ENCODE measurements at regions of chrX and their contacts with region 1.

Region 1: GRCh38 chrX:78555401-78555980 is 103.6 kb downstream of the RTL3 start:
- DNase-seq: peak in 3 of 14 experiments; percentile 41 to 48 (median 45)
- ATAC-seq: peak; percentile 26
- H3K4me3 ChIP-seq: no peak overlapping the region
- H3K4me3 Mint-ChIP-seq: no peak overlapping the region
- H3K27ac ChIP-seq: no peak overlapping the region
- H3K27ac Mint-ChIP-seq: no peak overlapping the region
- H3K4me1 ChIP-seq: no peaks in the 10 kb centered on the region
- H3K4me1 Mint-ChIP-seq: peaks cover 9% of the 10 kb centered on the region
- H3K27me3 ChIP-seq: no peaks in the 10 kb centered on the region
- H3K27me3 Mint-ChIP-seq: no peaks in the 10 kb centered on the region
- CTCF ChIP-seq: peak; percentile 47

Region 2: DNA sequence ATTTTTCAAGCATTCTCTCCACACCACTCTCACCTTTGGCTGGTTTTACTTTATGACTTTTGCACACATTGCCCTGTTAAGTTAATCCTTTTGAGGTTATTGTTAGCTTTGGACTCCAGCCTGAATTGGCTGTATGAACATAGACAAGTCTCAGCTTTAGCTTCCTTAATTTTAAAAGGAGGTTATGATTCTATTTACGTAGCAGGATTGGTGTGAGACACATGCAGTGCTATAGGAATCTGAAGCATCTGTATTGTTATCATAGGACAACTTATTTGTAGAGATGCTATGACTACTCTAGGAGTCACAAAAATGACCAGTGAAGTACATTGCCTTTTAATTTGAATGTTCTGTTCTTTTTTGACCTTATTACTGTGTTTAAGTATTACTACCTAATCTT is 601.8 kb before region 1 on chrX:
- CTCF ChIA-PET with region 1: no interaction called
- POLR2A ChIA-PET with region 1: no interaction called
- intact Hi-C with region 1: no loop called
- DNase-seq: no peak
- ATAC-seq: no peak
- H3K4me3 ChIP-seq: no peak overlapping the region
- H3K4me3 Mint-ChIP-seq: no peak overlapping the region
- H3K27ac ChIP-seq: no peak overlapping the region
- H3K27ac Mint-ChIP-seq: no peak overlapping the region
- H3K4me1 ChIP-seq: no peaks in the 10 kb centered on the region
- H3K4me1 Mint-ChIP-seq: peaks cover 21% of the 10 kb centered on the region
- H3K27me3 ChIP-seq: no peaks in the 10 kb centered on the region
- H3K27me3 Mint-ChIP-seq: no peaks in the 10 kb centered on the region
- CTCF ChIP-seq: no peak

Region 3: DNA sequence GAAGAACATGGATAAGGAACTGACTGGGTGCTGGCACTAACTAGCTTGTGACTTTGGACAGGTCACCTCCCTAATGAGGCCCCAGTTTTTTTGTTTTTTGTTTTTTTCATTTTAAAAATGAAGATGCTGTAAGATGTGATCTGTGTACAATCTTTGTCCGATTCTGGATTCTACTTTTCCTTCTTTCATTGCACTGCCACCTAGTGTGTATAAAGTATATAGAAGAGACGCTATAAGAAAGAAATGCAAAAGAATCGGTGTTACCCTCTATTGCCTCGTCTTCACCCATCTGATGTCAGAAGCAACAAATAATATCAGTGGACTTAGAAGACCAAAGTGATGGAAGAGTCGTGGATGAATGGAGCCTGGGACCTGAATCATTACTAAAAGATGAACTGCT is 331.1 kb after region 1 on chrX:
- CTCF ChIA-PET with region 1: no interaction called
- POLR2A ChIA-PET with region 1: no interaction called
- intact Hi-C with region 1: loop called (anchors 5 to 10 kb)
- DNase-seq: peak in 3 of 14 experiments; percentile 28 to 40 (median 36)
- ATAC-seq: peak; percentile 71
- H3K4me3 ChIP-seq: no peak overlapping the region
- H3K4me3 Mint-ChIP-seq: no peak overlapping the region
- H3K27ac ChIP-seq: no peak overlapping the region
- H3K27ac Mint-ChIP-seq: no peak overlapping the region
- H3K4me1 ChIP-seq: no peaks in the 10 kb centered on the region
- H3K4me1 Mint-ChIP-seq: peaks cover 8% of the 10 kb centered on the region
- H3K27me3 ChIP-seq: no peaks in the 10 kb centered on the region
- H3K27me3 Mint-ChIP-seq: no peaks in the 10 kb centered on the region
- CTCF ChIP-seq: peak; percentile 53

Region 4: DNA sequence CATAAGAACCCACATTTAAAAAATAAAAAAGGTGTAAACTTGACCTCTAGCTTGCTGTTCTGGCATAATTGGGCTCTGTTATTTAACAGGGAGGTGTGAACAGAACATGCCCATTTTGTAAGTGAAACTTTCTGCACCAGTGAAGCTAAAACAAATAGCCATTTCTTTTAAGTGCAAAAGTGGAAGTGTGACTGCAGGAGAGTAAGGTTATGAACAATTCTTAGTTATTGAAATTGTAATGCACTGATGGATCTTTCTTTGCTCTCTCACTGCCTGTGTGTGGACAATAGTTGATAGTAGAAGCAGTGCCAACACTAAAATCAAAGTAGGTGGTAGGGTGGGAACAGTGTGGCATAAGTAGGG is 402.3 kb after region 1 on chrX:
- CTCF ChIA-PET with region 1: no interaction called
- POLR2A ChIA-PET with region 1: no interaction called
- intact Hi-C with region 1: loop called in 1 of 2 experiments (anchors 10 kb)
- DNase-seq: no peak
- ATAC-seq: no peak
- H3K4me3 ChIP-seq: no peak overlapping the region
- H3K4me3 Mint-ChIP-seq: peak overlapping the region; percentile 45
- H3K27ac ChIP-seq: peak overlapping the region; percentile 13 to 28
- H3K27ac Mint-ChIP-seq: peak overlapping the region; percentile 63
- H3K4me1 ChIP-seq: peaks cover 28% of the 10 kb centered on the region
- H3K4me1 Mint-ChIP-seq: peaks cover 79% of the 10 kb centered on the region
- H3K27me3 ChIP-seq: no peaks in the 10 kb centered on the region
- H3K27me3 Mint-ChIP-seq: no peaks in the 10 kb centered on the region
- CTCF ChIP-seq: no peak

Region 5: GRCh38 chrX:79081895-79082512 is 526.5 kb after region 1 on chrX:
- CTCF ChIA-PET with region 1: no interaction called
- POLR2A ChIA-PET with region 1: no interaction called
- intact Hi-C with region 1: loop called (anchors 2 to 5 kb)
- DNase-seq: peak in 7 of 14 experiments; percentile 8 to 79 (median 51)
- ATAC-seq: peak; percentile 88
- H3K4me3 ChIP-seq: no peak overlapping the region
- H3K4me3 Mint-ChIP-seq: peak overlapping the region; percentile 82
- H3K27ac ChIP-seq: no peak overlapping the region
- H3K27ac Mint-ChIP-seq: peak overlapping the region; percentile 82
- H3K4me1 ChIP-seq: peaks cover 2% of the 10 kb centered on the region
- H3K4me1 Mint-ChIP-seq: peaks cover 33% of the 10 kb centered on the region
- H3K27me3 ChIP-seq: no peaks in the 10 kb centered on the region
- H3K27me3 Mint-ChIP-seq: no peaks in the 10 kb centered on the region
- CTCF ChIP-seq: peak; percentile 43

Region 6: GRCh38 chrX:79412972-79413371 is 857.5 kb after region 1 on chrX:
- CTCF ChIA-PET with region 1: no interaction called
- POLR2A ChIA-PET with region 1: no interaction called
- intact Hi-C with region 1: loop called (anchors 1 to 2 kb)
- DNase-seq: peak in 3 of 14 experiments; percentile 52 to 68 (median 66)
- ATAC-seq: no peak
- H3K4me3 ChIP-seq: peak overlapping the region; percentile 54
- H3K4me3 Mint-ChIP-seq: peak overlapping the region; percentile 87
- H3K27ac ChIP-seq: no peak overlapping the region
- H3K27ac Mint-ChIP-seq: peak overlapping the region; percentile 69
- H3K4me1 ChIP-seq: peaks cover 6% of the 10 kb centered on the region
- H3K4me1 Mint-ChIP-seq: peaks cover 37% of the 10 kb centered on the region
- H3K27me3 ChIP-seq: no peaks in the 10 kb centered on the region
- H3K27me3 Mint-ChIP-seq: no peaks in the 10 kb centered on the region
- CTCF ChIP-seq: peak; percentile 54

Region 7: DNA sequence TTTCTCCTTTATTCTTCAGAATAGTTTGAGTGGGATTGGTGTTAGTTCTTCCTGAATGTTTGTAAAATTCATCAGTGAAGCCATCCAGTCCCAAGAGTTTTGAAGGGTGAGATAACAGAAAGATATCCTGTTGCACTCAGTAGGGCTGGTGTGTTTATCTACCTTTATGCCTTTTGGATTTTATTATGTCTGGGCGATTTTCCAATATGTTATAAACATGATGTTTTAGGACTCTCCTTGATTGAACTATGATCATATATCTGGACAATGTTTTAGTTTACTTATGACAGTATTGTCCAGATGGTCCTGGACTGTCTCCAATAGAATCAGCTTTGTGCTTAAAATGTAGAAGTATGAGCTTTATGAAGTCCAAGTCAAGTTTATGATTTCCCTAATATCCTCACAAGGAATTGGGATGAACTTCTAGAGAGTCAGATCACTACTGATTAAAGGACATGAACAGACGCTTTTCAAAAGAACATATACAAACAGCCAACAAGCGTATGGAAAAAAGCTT is 889.3 kb after region 1 on chrX:
- CTCF ChIA-PET with region 1: no interaction called
- POLR2A ChIA-PET with region 1: no interaction called
- intact Hi-C with region 1: loop called in 1 of 2 experiments (anchors 10 kb)
- DNase-seq: no peak
- ATAC-seq: no peak
- H3K4me3 ChIP-seq: no peak overlapping the region
- H3K4me3 Mint-ChIP-seq: no peak overlapping the region
- H3K27ac ChIP-seq: no peak overlapping the region
- H3K27ac Mint-ChIP-seq: no peak overlapping the region
- H3K4me1 ChIP-seq: no peaks in the 10 kb centered on the region
- H3K4me1 Mint-ChIP-seq: no peaks in the 10 kb centered on the region
- H3K27me3 ChIP-seq: no peaks in the 10 kb centered on the region
- H3K27me3 Mint-ChIP-seq: no peaks in the 10 kb centered on the region
- CTCF ChIP-seq: no peak

Region 8: GRCh38 chrX:79452881-79453280 is 897.4 kb after region 1 on chrX:
- CTCF ChIA-PET with region 1: no interaction called
- POLR2A ChIA-PET with region 1: no interaction called
- intact Hi-C with region 1: loop called (anchors 1 to 10 kb)
- DNase-seq: no peak
- ATAC-seq: no peak
- H3K4me3 ChIP-seq: no peak overlapping the region
- H3K4me3 Mint-ChIP-seq: no peak overlapping the region
- H3K27ac ChIP-seq: no peak overlapping the region
- H3K27ac Mint-ChIP-seq: no peak overlapping the region
- H3K4me1 ChIP-seq: no peaks in the 10 kb centered on the region
- H3K4me1 Mint-ChIP-seq: peaks cover 3% of the 10 kb centered on the region
- H3K27me3 ChIP-seq: no peaks in the 10 kb centered on the region
- H3K27me3 Mint-ChIP-seq: no peaks in the 10 kb centered on the region
- CTCF ChIP-seq: no peak